K562 (cell line): ENCODE measurements at regions of chr15 and their contacts with region 1.

Region 1: DNA sequence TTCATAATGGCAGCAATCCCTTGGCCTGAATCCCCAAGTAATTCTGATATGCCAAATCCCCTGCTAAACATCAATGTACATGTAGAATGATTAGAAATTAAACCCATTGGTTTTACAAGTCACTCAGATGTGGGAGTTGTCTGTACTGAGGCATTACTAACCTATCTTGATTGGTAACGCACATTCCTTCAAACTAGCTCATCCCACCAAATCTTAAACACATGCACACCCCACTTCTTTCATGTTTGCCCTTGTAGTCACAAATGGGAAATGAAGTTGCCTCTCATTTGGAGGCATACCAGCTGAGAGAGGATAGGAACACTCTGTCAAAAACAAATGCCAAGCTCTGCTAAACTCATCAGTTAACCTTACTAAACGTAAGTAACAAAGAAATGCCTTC is 29.1 kb upstream of the MAN2C1 start:
- DNase-seq: no peak
- ATAC-seq: no peak
- H3K4me3 ChIP-seq: no peak overlapping the region
- H3K27ac ChIP-seq: no peak overlapping the region
- H3K4me1 ChIP-seq: no peaks in the 10 kb centered on the region
- H3K27me3 ChIP-seq: no peaks in the 10 kb centered on the region
- CTCF ChIP-seq: no peak
- EP300 ChIP-seq: no peak
- POLR2A ChIP-seq: no peak
- RAD21 ChIP-seq: no peak

Region 2: DNA sequence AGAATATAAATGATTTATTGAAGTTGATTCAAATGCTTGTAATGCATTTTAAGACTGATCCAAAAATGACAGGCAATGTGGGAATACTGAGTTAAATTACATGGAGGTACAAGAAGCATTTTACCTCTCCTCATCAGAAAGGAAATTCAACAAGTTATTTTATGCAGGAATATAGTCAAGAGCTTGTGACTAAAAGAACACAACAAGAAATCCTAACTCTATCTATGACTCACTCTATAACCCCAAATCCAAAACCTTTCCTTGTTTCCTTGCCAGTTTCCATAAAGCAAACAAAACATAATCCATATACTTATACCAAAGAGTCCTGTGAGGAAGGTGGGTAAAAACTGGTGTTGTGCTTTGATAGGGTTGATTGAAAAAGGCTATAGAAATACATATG is 23.2 kb after region 1 on chr15:
- CTCF ChIA-PET with region 1: no interaction called
- POLR2A ChIA-PET with region 1: no interaction called
- in situ Hi-C with region 1: no loop called
- intact Hi-C with region 1: loop called (anchors 1 kb)
- DNase-seq: no peak
- ATAC-seq: no peak
- H3K4me3 ChIP-seq: no peak overlapping the region
- H3K27ac ChIP-seq: no peak overlapping the region
- H3K4me1 ChIP-seq: no peaks in the 10 kb centered on the region
- H3K27me3 ChIP-seq: no peaks in the 10 kb centered on the region
- CTCF ChIP-seq: no peak
- EP300 ChIP-seq: no peak
- POLR2A ChIP-seq: no peak
- RAD21 ChIP-seq: no peak